ENCODE measurements at regions of chr1 and their contacts with region 1.

Region 1: GRCh38 chr1:160664573-160665051 is 17.8 kb upstream of the SLAMF1 start:
- DNase-seq: peak; percentile 63 to 76 (median 74)
- H3K4me3 ChIP-seq: peak overlapping the region in 1 of 2 donors; percentile 29
- H3K4me3 Mint-ChIP-seq: peak overlapping the region; percentile 60 to 85 (median 74)
- H3K27ac ChIP-seq: peak overlapping the region; percentile 62
- H3K27ac Mint-ChIP-seq: peak overlapping the region; percentile 79 to 97 (median 90)
- H3K4me1 ChIP-seq: peaks cover 73% of the 10 kb centered on the region
- H3K4me1 Mint-ChIP-seq: peaks cover 57 to 74% (median 64%) of the 10 kb centered on the region in 4 donors
- H3K27me3 ChIP-seq: no peaks in the 10 kb centered on the region
- H3K27me3 Mint-ChIP-seq: no peaks in the 10 kb centered on the region

Region 2: GRCh38 chr1:159737238-159737916 is 927.2 kb before region 1 on chr1:
- CTCF ChIA-PET with region 1: no interaction called
- POLR2A ChIA-PET with region 1: no interaction called
- intact Hi-C with region 1: no loop called
- DNase-seq: no peak
- H3K4me3 ChIP-seq: no peak overlapping the region
- H3K4me3 Mint-ChIP-seq: no peak overlapping the region
- H3K27ac ChIP-seq: no peak overlapping the region
- H3K27ac Mint-ChIP-seq: no peak overlapping the region
- H3K4me1 ChIP-seq: no peaks in the 10 kb centered on the region
- H3K4me1 Mint-ChIP-seq: no peaks in the 10 kb centered on the region
- H3K27me3 ChIP-seq: no peaks in the 10 kb centered on the region
- H3K27me3 Mint-ChIP-seq: peaks cover 8 to 12% of the 10 kb centered on the region in 2 donors

Region 3: GRCh38 chr1:160629286-160630210 is 35.1 kb before region 1 on chr1:
- CTCF ChIA-PET with region 1: interaction called, 139 read pairs
- POLR2A ChIA-PET with region 1: interaction called, 20 read pairs
- intact Hi-C with region 1: loop called (anchors 2 kb)
- DNase-seq: peak; percentile 88 to 94 (median 91)
- H3K4me3 ChIP-seq: peak overlapping the region; percentile 18 to 36
- H3K4me3 Mint-ChIP-seq: peak overlapping the region; percentile 80 to 91 (median 84)
- H3K27ac ChIP-seq: peak overlapping the region; percentile 93
- H3K27ac Mint-ChIP-seq: peak overlapping the region; percentile 87 to 100 (median 99)
- H3K4me1 ChIP-seq: peaks cover 98% of the 10 kb centered on the region
- H3K4me1 Mint-ChIP-seq: peaks cover 82 to 100% (median 93%) of the 10 kb centered on the region in 4 donors
- H3K27me3 ChIP-seq: no peaks in the 10 kb centered on the region
- H3K27me3 Mint-ChIP-seq: no peaks in the 10 kb centered on the region

Region 4: GRCh38 chr1:160637821-160638539 is 26.6 kb before region 1 on chr1:
- CTCF ChIA-PET with region 1: interaction called, 5 read pairs
- POLR2A ChIA-PET with region 1: interaction called, 70 read pairs
- intact Hi-C with region 1: no loop called
- DNase-seq: peak; percentile 82 to 89 (median 85)
- H3K4me3 ChIP-seq: peak overlapping the region; percentile 31 to 39
- H3K4me3 Mint-ChIP-seq: peak overlapping the region; percentile 75 to 87 (median 82)
- H3K27ac ChIP-seq: peak overlapping the region; percentile 68
- H3K27ac Mint-ChIP-seq: peak overlapping the region; percentile 87 to 99 (median 98)
- H3K4me1 ChIP-seq: peaks cover 99% of the 10 kb centered on the region
- H3K4me1 Mint-ChIP-seq: peaks cover 77 to 98% (median 88%) of the 10 kb centered on the region in 4 donors
- H3K27me3 ChIP-seq: no peaks in the 10 kb centered on the region
- H3K27me3 Mint-ChIP-seq: no peaks in the 10 kb centered on the region

Region 5: GRCh38 chr1:160646711-160647328 is 17.8 kb before region 1 on chr1 and contains the start of gene SLAMF1:
- CTCF ChIA-PET with region 1: interaction called, 5 read pairs
- POLR2A ChIA-PET with region 1: interaction called, 70 read pairs
- intact Hi-C with region 1: loop called (anchors 2 kb)
- DNase-seq: peak; percentile 45 to 74 (median 51)
- H3K4me3 ChIP-seq: peak within 1 kb of the TSS; percentile 80 to 97
- H3K4me3 Mint-ChIP-seq: peak within 1 kb of the TSS; percentile 98 to 100 (median 99)
- H3K27ac ChIP-seq: peak within 1 kb of the TSS; percentile 88
- H3K27ac Mint-ChIP-seq: peak within 1 kb of the TSS; percentile 87 to 98 (median 97)
- H3K4me1 ChIP-seq: peaks cover 55% of the 10 kb centered on the region
- H3K4me1 Mint-ChIP-seq: peaks cover 47 to 94% (median 61%) of the 10 kb centered on the region in 4 donors
- H3K27me3 ChIP-seq: no peaks in the 10 kb centered on the region
- H3K27me3 Mint-ChIP-seq: no peaks in the 10 kb centered on the region
- total RNA-seq, gene SLAMF1: 59.8 to 59.9 TPM

Measured in CD4-positive, alpha-beta memory T cell (primary cell).